AG04450 (cell line): ENCODE measurements at regions of chr10 and their contacts with region 1.

Region 1: GRCh38 chr10:21732067-21732772 is 198.2 kb downstream of the MLLT10 start:
- DNase-seq: peak; percentile 61
- H3K4me3 ChIP-seq: no peak overlapping the region
- H3K27ac ChIP-seq: no peak overlapping the region
- H3K27me3 ChIP-seq: no peaks in the 10 kb centered on the region
- CTCF ChIP-seq: peak; percentile 98

Region 2: GRCh38 chr10:21495752-21496342 is 236.4 kb before region 1 on chr10:
- CTCF ChIA-PET with region 1: interaction called, 55 read pairs
- POLR2A ChIA-PET with region 1: interaction called, 5 read pairs
- DNase-seq: no peak
- H3K4me3 ChIP-seq: peak overlapping the region; percentile 85
- H3K27ac ChIP-seq: peak overlapping the region; percentile 31
- H3K27me3 ChIP-seq: no peaks in the 10 kb centered on the region
- CTCF ChIP-seq: peak; percentile 78

Region 3: GRCh38 chr10:21524526-21525366 is 207.5 kb before region 1 on chr10:
- CTCF ChIA-PET with region 1: interaction called, 10 read pairs
- POLR2A ChIA-PET with region 1: no interaction called
- DNase-seq: no peak
- H3K4me3 ChIP-seq: peak overlapping the region; percentile 74
- H3K27ac ChIP-seq: peak overlapping the region; percentile 91
- H3K27me3 ChIP-seq: no peaks in the 10 kb centered on the region
- CTCF ChIP-seq: no peak

Region 4: DNA sequence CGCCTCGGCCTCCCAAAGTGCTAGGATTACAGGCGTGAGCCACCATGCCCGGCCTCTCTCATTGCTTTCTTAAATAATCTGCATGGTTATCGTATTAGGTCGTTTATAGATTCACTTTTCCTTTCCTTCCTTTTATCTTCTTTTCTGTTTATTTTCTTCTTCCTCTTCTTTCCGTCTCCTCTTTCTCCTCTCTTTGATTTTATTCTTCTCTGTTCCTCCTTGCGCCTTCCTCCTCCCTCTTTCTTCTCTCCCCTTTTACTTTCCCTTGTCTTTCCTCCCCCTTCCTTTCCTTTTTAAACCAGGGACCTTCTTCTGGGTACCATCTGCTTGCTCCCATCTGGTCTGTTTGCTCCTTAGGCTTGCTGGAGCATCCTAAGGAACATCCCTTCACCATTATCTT is 179.6 kb before region 1 on chr10:
- CTCF ChIA-PET with region 1: interaction called, 12 read pairs
- POLR2A ChIA-PET with region 1: no interaction called
- DNase-seq: no peak
- H3K4me3 ChIP-seq: no peak overlapping the region
- H3K27ac ChIP-seq: no peak overlapping the region
- H3K27me3 ChIP-seq: no peaks in the 10 kb centered on the region
- CTCF ChIP-seq: no peak

Region 5: DNA sequence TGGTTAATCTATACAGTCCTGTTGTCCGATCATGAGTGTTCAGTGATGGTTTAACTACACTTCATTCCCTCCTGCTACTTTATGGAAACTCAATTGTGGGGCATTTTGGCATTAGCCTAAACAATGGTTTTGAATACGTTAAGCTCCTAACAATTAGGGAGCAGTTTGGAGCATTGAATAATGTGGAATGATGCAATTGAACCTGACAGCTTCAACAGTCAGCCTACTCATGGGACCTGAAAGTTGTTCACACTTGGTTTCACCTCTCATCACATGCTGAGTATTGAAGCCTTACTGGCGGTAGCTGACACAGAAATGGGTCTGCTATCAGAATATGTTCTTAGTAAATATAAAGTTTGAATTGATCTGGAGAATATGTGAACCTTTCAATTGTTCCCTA is 12.1 kb before region 1 on chr10:
- CTCF ChIA-PET with region 1: interaction called, 10 read pairs
- POLR2A ChIA-PET with region 1: no interaction called
- DNase-seq: no peak
- H3K4me3 ChIP-seq: no peak overlapping the region
- H3K27ac ChIP-seq: no peak overlapping the region
- H3K27me3 ChIP-seq: no peaks in the 10 kb centered on the region
- CTCF ChIP-seq: no peak

Region 6: GRCh38 chr10:21888959-21889358 is 156.7 kb after region 1 on chr10:
- CTCF ChIA-PET with region 1: no interaction called
- POLR2A ChIA-PET with region 1: no interaction called
- DNase-seq: no peak
- H3K4me3 ChIP-seq: no peak overlapping the region
- H3K27ac ChIP-seq: no peak overlapping the region
- H3K27me3 ChIP-seq: no peaks in the 10 kb centered on the region
- CTCF ChIP-seq: no peak